A549 (cell line): ENCODE measurements at regions of chr19 and their contacts with region 1.

Region 1: DNA sequence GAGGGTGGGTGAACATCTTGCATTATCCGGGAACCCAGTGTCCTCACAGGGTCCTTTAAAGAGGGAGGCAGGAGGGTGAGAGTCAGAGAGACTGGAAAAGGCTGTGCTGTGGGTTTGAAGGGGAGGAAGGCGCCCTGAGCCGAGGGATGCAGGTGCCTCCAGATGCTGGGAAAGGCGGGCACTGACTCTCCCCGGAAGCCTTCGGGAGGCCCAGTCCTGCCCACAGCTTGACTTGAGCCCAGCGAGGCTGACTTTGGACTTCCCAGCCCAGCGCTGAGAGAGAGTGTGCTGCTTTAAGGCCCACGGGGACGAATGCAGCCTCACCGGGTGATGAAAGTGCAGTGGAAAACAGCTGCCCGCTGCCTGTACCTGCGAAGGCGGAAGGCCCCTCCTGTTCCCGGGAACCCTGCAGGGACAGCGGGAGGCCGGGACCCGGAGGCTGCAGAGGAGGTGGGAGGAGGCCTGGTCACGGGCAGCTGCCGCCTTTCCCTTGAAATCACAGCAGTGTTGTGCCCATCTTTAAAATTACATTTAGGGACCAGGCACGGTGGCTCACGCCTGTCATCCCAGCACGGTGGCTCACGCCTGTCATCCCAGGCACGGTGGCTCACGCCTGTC is 16.1 kb downstream of the REXO1 start:
- DNase-seq: no peak
- ATAC-seq: no peak; a peak in 1 of 6 replicates
- H3K4me3 ChIP-seq: no peak overlapping the region
- H3K27ac ChIP-seq: no peak overlapping the region
- H3K4me1 ChIP-seq: no peaks in the 10 kb centered on the region
- CTCF ChIP-seq: no peak
- EP300 ChIP-seq: no peak
- POLR2A ChIP-seq: no peak
- RAD21 ChIP-seq: no peak

Region 2: DNA sequence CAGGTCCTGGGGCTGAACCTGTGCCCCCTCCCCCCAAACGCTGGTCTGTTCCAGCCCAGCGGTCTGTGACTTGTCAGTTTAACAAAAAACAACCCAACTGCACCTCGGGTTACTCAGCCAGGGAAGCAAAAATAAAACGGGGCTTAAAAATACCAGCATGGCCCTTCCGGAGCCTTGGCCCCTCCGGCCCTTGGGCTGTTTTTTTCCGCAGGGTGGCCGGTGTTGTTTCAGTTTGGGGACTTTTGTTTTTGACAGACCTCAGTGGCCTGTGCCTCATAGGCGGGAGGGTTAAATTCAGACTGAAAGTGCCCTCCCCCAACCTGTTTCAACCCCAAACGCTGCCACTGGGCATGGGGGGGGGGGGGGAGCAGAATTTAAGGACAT is 183.7 kb before region 1 on chr19:
- CTCF ChIA-PET with region 1: no interaction called
- POLR2A ChIA-PET with region 1: no interaction called
- DNase-seq: no peak
- ATAC-seq: no peak
- H3K4me3 ChIP-seq: no peak overlapping the region
- H3K27ac ChIP-seq: no peak overlapping the region
- H3K4me1 ChIP-seq: peaks cover 9% of the 10 kb centered on the region
- CTCF ChIP-seq: no peak
- EP300 ChIP-seq: no peak
- POLR2A ChIP-seq: no peak
- RAD21 ChIP-seq: no peak

Region 3: DNA sequence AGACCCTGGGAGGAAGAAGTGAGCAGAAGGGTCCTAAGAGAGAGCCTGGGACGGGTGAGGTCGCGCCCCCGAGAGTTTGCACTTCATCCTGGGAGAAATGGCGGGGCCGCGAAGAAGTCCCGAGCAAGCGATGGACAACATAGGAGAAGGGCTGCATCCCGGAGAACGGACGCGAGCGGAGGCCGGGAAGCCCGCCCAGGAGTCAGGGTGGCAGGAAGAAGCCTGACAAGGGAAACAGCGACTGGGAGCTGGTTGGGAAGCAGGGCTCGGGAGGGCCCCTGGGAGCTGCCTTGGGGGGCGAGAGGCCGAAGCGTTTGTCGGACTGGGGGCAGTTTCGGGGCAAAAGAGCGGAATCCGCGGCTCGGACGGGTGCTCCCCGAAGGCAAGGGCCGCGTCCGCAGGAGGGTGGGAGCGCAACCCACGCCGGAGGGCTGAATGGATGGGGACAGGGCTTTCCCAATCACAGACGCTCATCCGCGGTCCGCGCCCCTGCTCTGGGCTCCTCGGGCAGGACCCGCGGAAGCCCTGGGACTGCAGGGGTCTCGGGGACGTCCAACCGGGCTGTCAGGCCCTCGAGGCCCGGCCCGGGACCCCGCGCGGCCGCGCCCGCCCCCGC is 52.7 kb after region 1 on chr19:
- CTCF ChIA-PET with region 1: interaction called, 3 read pairs
- POLR2A ChIA-PET with region 1: interaction called, 10 read pairs
- DNase-seq: no peak
- ATAC-seq: peak; percentile 32; a peak in 5 of 6 replicates
- H3K4me3 ChIP-seq: peak overlapping the region; percentile 89
- H3K27ac ChIP-seq: peak overlapping the region; percentile 79 to 98
- H3K4me1 ChIP-seq: peaks cover 6% of the 10 kb centered on the region; the same call in 1 of the 3 replicates
- CTCF ChIP-seq: no peak
- EP300 ChIP-seq: no peak
- POLR2A ChIP-seq: 0 out of 2 replicates have a peak, but pooled peaks have one; percentile 16
- RAD21 ChIP-seq: no peak